ENCODE measurements at regions of chr2 and their contacts with region 1.

Region 1: GRCh38 chr2:47043142-47043890 is 111.8 kb downstream of the STPG4 start:
- DNase-seq: peak; percentile 94
- H3K4me3 ChIP-seq: peak overlapping the region; percentile 10 to 39 (median 15)
- H3K27ac ChIP-seq: peak overlapping the region; percentile 92
- H3K4me1 ChIP-seq: peaks cover 30% of the 10 kb centered on the region
- H3K27me3 ChIP-seq: no peaks in the 10 kb centered on the region
- CTCF ChIP-seq: no peak

Region 2: GRCh38 chr2:47065771-47066380 is 22.6 kb after region 1 on chr2:
- CTCF ChIA-PET with region 1: no interaction called
- dilution Hi-C with region 1: no loop called
- in situ Hi-C with region 1: no loop called
- intact Hi-C with region 1: loop called (anchors 1 kb)
- DNase-seq: peak; percentile 37
- H3K4me3 ChIP-seq: no peak overlapping the region
- H3K27ac ChIP-seq: no peak overlapping the region
- H3K4me1 ChIP-seq: peaks cover 47% of the 10 kb centered on the region
- H3K27me3 ChIP-seq: no peaks in the 10 kb centered on the region
- CTCF ChIP-seq: no peak

Measured in mammary epithelial cell (primary cell).